GM10248 (cell line): ENCODE measurements at regions of chr5 and their contacts with region 1.

Region 1: GRCh38 chr5:75331095-75332090 is 5.6 kb upstream of the HMGCR start:
- DNase-seq: no peak
- CTCF ChIP-seq: no peak

Region 2: DNA sequence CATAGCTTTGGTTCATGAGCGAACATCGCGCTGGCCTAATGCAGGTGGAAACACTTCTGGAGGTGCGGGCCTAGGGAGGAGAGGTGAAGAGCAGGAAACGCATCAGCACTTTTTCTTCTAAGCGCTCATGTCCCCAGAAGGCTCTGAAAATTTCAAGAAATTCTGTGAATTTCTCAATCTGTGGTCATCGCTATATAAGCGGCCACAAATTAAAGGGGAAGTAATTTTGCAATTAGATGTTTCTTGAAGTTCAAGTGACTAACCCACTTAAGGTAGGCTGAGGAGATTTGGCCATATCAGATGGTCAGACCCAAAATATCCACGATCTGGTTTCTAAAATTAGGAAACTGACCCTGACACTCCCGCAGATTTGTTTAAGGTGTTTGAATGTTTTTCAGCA is 11.1 kb before region 1 on chr5:
- CTCF ChIA-PET with region 1: interaction called, 12 read pairs
- POLR2A ChIA-PET with region 1: no interaction called
- DNase-seq: no peak
- CTCF ChIP-seq: no peak

Region 3: GRCh38 chr5:75706016-75706415 is 374.6 kb after region 1 on chr5:
- CTCF ChIA-PET with region 1: no interaction called
- POLR2A ChIA-PET with region 1: no interaction called
- DNase-seq: no peak
- CTCF ChIP-seq: no peak